ENCODE measurements at regions of chr7 and their contacts with region 1.

Region 1: DNA sequence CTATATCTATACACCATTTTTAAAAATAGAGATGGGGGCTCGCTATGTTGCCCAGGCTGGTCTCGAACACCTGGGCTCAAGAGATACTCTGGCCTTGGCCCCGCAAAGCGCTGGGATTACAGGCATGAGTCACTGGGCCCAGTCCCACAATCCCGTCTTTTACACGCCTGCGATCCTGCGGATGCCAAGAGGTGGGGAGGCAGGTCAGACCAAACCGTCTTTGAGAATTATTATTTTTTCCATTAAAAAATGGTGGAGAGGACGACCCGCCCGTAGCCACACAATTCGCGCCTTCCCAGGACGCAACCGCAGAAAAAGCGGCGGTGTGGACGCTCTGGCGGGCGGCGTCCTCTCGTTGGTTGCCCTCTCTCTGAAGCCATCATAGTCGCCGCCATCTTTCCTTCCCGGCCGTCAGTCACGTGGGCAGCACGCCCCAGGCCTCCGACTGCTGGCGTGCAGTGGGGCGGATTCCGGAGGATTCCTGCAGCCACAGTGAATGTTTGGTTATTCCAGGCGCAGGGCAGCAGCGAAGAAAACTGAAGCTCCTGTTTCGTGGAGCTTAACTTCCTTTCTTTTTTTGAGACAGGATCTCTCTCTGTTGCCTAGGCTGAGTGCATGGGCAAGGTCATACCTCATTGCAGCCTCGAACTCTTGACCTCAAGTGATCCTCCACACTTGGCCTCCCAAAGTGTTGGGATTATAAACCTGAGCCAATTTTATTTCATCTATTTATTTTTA is 9.9 kb upstream of the EPHB4 start:
- DNase-seq: peak; percentile 31
- ATAC-seq: peak; percentile 97
- H3K4me3 ChIP-seq: 0 out of 2 replicates have a peak overlapping the region, but pooled peaks have one; percentile 5
- H3K27ac ChIP-seq: no peak overlapping the region
- H3K4me1 ChIP-seq: no peaks in the 10 kb centered on the region; the same call in 1 of the 2 replicates
- H3K27me3 ChIP-seq: no peaks in the 10 kb centered on the region
- CTCF ChIP-seq: no peak
- EP300 ChIP-seq: no peak
- POLR2A ChIP-seq: peak; percentile 47; the same call in 1 of the 2 replicates
- RAD21 ChIP-seq: no peak

Region 2: GRCh38 chr7:100803398-100804233 is 33.7 kb before region 1 on chr7:
- CTCF ChIA-PET with region 1: interaction called, 3 read pairs
- POLR2A ChIA-PET with region 1: interaction called, 3 read pairs
- RAD21 ChIA-PET with region 1: interaction called, 6 read pairs
- SMC1A ChIA-PET with region 1: interaction called, 5 read pairs
- in situ Hi-C with region 1: no loop called
- intact Hi-C with region 1: loop called (anchors 5 kb)
- DNase-seq: peak; percentile 56
- ATAC-seq: peak; percentile 98
- H3K4me3 ChIP-seq: peak overlapping the region; percentile 53
- H3K27ac ChIP-seq: peak overlapping the region; percentile 80
- H3K4me1 ChIP-seq: peaks cover 15% of the 10 kb centered on the region
- H3K27me3 ChIP-seq: no peaks in the 10 kb centered on the region
- CTCF ChIP-seq: no peak
- EP300 ChIP-seq: no peak
- POLR2A ChIP-seq: peak; percentile 47; the same call in 1 of the 2 replicates
- RAD21 ChIP-seq: no peak

Measured in GM12878 (cell line).